Transverse colon (tissue), 4 donors: ENCODE measurements at regions of chr2 and their contacts with region 1.

Region 1: GRCh38 chr2:25448808-25449207 is 107.1 kb upstream of the DNMT3A start:
- DNase-seq: no peak
- H3K4me3 ChIP-seq: no peak overlapping the region
- H3K27ac ChIP-seq: no peak overlapping the region
- H3K4me1 ChIP-seq: peaks cover 0 to 9% (median 3%) of the 10 kb centered on the region in 4 donors
- H3K27me3 ChIP-seq: no peaks in the 10 kb centered on the region
- CTCF ChIP-seq: no peak
- EP300 ChIP-seq: no peak
- POLR2A ChIP-seq: no peak

Region 2: DNA sequence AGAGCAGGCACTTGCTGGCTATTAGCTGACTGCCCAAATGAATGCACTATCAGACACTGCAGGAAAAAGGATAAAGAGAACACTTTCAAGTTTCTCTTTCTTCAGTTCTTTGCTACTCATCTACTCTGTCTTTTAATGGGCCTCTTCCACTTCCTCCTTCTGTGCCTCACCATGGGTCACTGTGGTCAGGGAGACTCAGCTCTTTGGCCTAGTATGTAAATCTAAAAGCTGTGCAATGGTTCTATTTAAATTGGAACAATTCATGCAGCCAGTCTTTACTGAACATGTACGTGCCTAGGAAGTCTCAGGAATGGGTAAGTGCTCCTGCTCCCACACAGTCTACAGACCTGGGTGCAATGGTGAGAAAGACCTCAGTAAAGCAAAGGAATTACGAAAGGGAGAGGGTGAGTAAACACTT is 28.0 kb before region 1 on chr2:
- in situ Hi-C with region 1: no loop called
- intact Hi-C with region 1: loop called (anchors 1 kb)
- DNase-seq: peak; percentile 42
- H3K4me3 ChIP-seq: no peak overlapping the region
- H3K27ac ChIP-seq: peak overlapping the region; percentile 67 to 79 (median 72)
- H3K4me1 ChIP-seq: peaks cover 0 to 24% (median 14%) of the 10 kb centered on the region in 4 donors
- H3K27me3 ChIP-seq: no peaks in the 10 kb centered on the region
- CTCF ChIP-seq: no peak
- EP300 ChIP-seq: no peak
- POLR2A ChIP-seq: no peak

Region 3: DNA sequence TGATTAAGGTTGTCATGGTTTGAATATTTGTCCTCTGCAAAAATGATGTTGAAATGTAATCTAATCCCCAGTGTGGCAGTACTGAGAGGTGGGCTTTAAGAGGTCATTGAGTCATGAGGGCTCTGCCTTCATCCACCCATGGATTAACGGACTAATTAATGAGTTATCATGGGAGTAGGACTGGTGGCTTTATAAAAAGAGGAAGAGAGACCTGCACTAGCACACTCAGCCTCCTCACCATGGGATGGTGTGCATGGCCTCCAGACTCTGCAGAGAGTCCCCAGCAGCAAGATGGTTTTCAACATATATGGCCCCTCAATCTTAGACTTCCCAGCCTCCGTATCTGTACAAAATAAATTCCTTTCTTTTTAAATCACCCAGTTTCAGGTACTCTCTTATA is 183.6 kb after region 1 on chr2:
- in situ Hi-C with region 1: no loop called
- intact Hi-C with region 1: no loop called
- DNase-seq: no peak
- H3K4me3 ChIP-seq: no peak overlapping the region
- H3K27ac ChIP-seq: no peak overlapping the region
- H3K4me1 ChIP-seq: no peaks in the 10 kb centered on the region
- H3K27me3 ChIP-seq: no peaks in the 10 kb centered on the region
- CTCF ChIP-seq: no peak
- EP300 ChIP-seq: no peak
- POLR2A ChIP-seq: no peak